ENCODE measurements at regions of chr6 and their contacts with region 1.

Region 1: GRCh38 chr6:118893807-118894424 is at the start of gene ASF1A:
- DNase-seq: peak; percentile 92 to 97 (median 96)
- H3K4me3 ChIP-seq: peak within 1 kb of the TSS; percentile 92
- H3K4me3 Mint-ChIP-seq: peak within 1 kb of the TSS; percentile 89 to 99 (median 94)
- H3K27ac ChIP-seq: peak within 1 kb of the TSS; percentile 87
- H3K27ac Mint-ChIP-seq: peak within 1 kb of the TSS; percentile 96 to 99 (median 98)
- H3K4me1 ChIP-seq: peaks cover 63% of the 10 kb centered on the region
- H3K4me1 Mint-ChIP-seq: peaks cover 54 to 73% (median 69%) of the 10 kb centered on the region in 3 donors
- H3K27me3 ChIP-seq: no peaks in the 10 kb centered on the region
- H3K27me3 Mint-ChIP-seq: peaks cover 0 to 3% of the 10 kb centered on the region in 2 donors
- total RNA-seq, gene ASF1A: 42.6 to 46.1 TPM

Region 2: DNA sequence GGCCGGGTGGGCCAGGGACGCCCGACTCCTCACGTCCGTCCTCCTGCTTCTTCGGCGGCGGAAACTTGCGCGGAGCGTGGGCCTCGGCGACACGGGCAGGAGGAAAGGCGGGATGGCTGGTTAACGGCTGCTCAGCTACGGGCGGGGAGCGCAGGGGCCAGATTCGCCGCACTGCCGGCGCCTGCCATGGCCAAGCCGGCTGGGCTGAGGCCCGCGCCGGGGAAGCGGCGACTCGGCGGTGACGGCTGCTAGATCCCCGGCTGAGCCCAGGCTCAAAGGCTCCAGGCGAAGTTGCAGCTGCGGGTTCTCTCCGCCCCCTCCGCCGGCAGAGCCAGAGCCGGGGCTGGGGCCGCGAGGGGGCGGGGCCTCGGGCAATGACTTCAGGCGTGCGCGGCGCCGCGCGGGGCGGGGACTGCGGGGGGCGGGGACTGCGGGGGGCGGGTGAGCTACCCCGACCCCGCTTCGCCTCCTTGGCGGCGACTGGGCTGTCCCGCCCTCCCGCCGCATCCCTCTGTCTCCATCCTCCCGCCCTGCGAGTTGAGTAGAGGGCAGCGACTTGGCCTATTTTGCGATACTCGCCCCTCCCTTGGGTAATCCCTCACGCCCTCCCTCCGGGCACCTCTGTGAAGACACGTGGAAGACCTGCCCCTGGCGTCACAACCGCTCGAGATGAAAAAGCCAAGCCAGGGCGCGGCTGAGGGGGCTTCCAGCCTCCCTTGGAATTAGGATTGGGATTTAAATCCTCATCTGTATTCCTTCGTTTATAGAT is 242.4 kb before region 1 on chr6 and contains the start of gene CEP85L:
- CTCF ChIA-PET with region 1: interaction called, 3 read pairs
- POLR2A ChIA-PET with region 1: interaction called, 10 read pairs
- DNase-seq: peak; percentile 87 to 94 (median 89)
- H3K4me3 ChIP-seq: peak within 1 kb of the TSS; percentile 75
- H3K4me3 Mint-ChIP-seq: peak within 1 kb of the TSS; percentile 94 to 98 (median 97)
- H3K27ac ChIP-seq: peak within 1 kb of the TSS; percentile 82
- H3K27ac Mint-ChIP-seq: peak within 1 kb of the TSS; percentile 87 to 98 (median 97)
- H3K4me1 ChIP-seq: peaks cover 34% of the 10 kb centered on the region
- H3K4me1 Mint-ChIP-seq: peaks cover 45 to 56% (median 54%) of the 10 kb centered on the region in 3 donors
- H3K27me3 ChIP-seq: no peaks in the 10 kb centered on the region
- H3K27me3 Mint-ChIP-seq: peaks cover 0 to 2% of the 10 kb centered on the region in 2 donors
- total RNA-seq, gene CEP85L: 28.4 to 29.1 TPM

Region 3: DNA sequence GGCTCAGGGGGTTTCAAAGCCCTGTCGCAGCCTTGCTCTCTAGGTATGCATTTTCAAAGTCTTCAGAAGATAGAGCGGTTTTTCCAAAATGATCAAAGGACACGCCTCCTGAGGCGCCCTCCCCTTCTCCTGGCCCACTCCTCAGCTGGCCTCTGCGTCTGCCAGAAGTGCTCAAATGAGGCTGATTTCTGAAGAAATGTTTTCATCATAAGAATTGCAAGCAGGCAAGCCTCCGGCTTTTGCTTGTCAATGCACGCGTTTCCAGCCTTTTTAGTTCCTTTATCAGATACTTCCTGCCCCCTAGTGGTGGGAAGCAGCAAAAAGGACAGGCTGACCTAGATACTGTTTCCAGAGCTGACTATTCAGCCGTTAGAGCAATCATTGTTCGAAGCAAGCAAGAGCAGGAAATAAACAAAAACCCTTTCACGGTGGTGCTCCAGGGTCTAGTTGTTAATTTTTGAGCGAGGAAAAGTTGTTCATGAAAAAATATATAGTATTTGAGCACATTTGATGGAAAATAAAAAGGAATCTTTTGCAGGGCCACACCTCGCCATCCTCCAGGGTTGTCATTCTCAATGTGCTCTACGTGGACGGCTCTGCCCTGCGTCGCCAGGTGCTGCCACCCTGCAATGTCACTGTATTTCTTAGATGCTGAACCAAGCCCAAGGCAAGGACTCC is 93.4 kb before region 1 on chr6:
- CTCF ChIA-PET with region 1: interaction called, 32 read pairs
- POLR2A ChIA-PET with region 1: interaction called, 5 read pairs
- DNase-seq: peak; percentile 64 to 87 (median 81)
- H3K4me3 ChIP-seq: peak overlapping the region; percentile 22
- H3K4me3 Mint-ChIP-seq: peak overlapping the region; percentile 4 to 71 (median 55)
- H3K27ac ChIP-seq: no peak overlapping the region
- H3K27ac Mint-ChIP-seq: peak overlapping the region; percentile 30 to 96 (median 90)
- H3K4me1 ChIP-seq: peaks cover 27% of the 10 kb centered on the region
- H3K4me1 Mint-ChIP-seq: peaks cover 35 to 47% (median 41%) of the 10 kb centered on the region in 3 donors
- H3K27me3 ChIP-seq: no peaks in the 10 kb centered on the region
- H3K27me3 Mint-ChIP-seq: no peaks in the 10 kb centered on the region

Region 4: DNA sequence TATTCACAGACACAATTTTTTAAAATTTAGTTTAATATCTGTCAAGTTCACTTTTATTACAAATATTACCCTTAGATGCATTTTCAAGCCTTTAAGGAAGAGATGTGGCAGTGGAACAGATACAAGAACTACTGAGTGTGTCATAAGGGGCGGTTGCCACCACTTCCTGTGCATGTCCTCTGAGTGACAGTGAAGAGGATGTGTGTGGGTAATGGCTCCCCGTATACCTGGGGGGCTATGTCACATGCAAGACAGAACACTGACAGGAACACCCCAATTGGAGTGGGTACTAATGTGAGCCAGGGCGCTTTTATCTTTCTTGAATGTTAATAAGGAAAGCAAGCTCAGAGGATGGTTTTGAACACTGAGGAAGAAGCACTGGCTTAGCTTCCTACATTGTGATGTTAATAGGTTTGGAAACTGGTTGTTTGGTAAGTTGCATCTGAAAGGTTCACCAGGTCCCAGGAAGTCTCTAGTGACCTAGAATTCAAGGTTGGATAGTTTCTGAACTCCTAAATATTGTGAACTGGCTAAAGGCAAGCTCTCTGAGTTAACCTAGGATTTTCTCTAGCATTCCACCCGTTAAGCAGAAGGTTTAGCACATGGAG is 83.4 kb before region 1 on chr6:
- CTCF ChIA-PET with region 1: interaction called, 44 read pairs
- POLR2A ChIA-PET with region 1: interaction called, 24 read pairs
- DNase-seq: peak; percentile 56 to 88 (median 77)
- H3K4me3 ChIP-seq: peak overlapping the region; percentile 49
- H3K4me3 Mint-ChIP-seq: peak overlapping the region; percentile 12 to 87 (median 82)
- H3K27ac ChIP-seq: peak overlapping the region; percentile 57
- H3K27ac Mint-ChIP-seq: peak overlapping the region; percentile 81 to 99 (median 98)
- H3K4me1 ChIP-seq: peaks cover 33% of the 10 kb centered on the region
- H3K4me1 Mint-ChIP-seq: peaks cover 65 to 78% (median 78%) of the 10 kb centered on the region in 3 donors
- H3K27me3 ChIP-seq: no peaks in the 10 kb centered on the region
- H3K27me3 Mint-ChIP-seq: no peaks in the 10 kb centered on the region

Region 5: GRCh38 chr6:118934461-118935330 is 40.8 kb after region 1 on chr6 and contains the start of gene MCM9:
- CTCF ChIA-PET with region 1: interaction called, 5 read pairs
- POLR2A ChIA-PET with region 1: interaction called, 21 read pairs
- DNase-seq: peak; percentile 84 to 88 (median 87)
- H3K4me3 ChIP-seq: peak within 1 kb of the TSS; percentile 96
- H3K4me3 Mint-ChIP-seq: peak within 1 kb of the TSS; percentile 86 to 97 (median 89)
- H3K27ac ChIP-seq: peak within 1 kb of the TSS; percentile 97
- H3K27ac Mint-ChIP-seq: peak within 1 kb of the TSS; percentile 89 to 94 (median 92)
- H3K4me1 ChIP-seq: peaks cover 18% of the 10 kb centered on the region
- H3K4me1 Mint-ChIP-seq: peaks cover 26 to 53% (median 52%) of the 10 kb centered on the region in 3 donors
- H3K27me3 ChIP-seq: no peaks in the 10 kb centered on the region
- H3K27me3 Mint-ChIP-seq: no peaks in the 10 kb centered on the region
- total RNA-seq, gene MCM9: 21.3 to 25.2 TPM

Region 6: GRCh38 chr6:118968416-118968815 is 74.5 kb after region 1 on chr6:
- CTCF ChIA-PET with region 1: no interaction called
- POLR2A ChIA-PET with region 1: no interaction called
- DNase-seq: no peak
- H3K4me3 ChIP-seq: no peak overlapping the region
- H3K4me3 Mint-ChIP-seq: no peak overlapping the region
- H3K27ac ChIP-seq: no peak overlapping the region
- H3K27ac Mint-ChIP-seq: no peak overlapping the region
- H3K4me1 ChIP-seq: no peaks in the 10 kb centered on the region
- H3K4me1 Mint-ChIP-seq: no peaks in the 10 kb centered on the region
- H3K27me3 ChIP-seq: no peaks in the 10 kb centered on the region
- H3K27me3 Mint-ChIP-seq: no peaks in the 10 kb centered on the region

Region 7: DNA sequence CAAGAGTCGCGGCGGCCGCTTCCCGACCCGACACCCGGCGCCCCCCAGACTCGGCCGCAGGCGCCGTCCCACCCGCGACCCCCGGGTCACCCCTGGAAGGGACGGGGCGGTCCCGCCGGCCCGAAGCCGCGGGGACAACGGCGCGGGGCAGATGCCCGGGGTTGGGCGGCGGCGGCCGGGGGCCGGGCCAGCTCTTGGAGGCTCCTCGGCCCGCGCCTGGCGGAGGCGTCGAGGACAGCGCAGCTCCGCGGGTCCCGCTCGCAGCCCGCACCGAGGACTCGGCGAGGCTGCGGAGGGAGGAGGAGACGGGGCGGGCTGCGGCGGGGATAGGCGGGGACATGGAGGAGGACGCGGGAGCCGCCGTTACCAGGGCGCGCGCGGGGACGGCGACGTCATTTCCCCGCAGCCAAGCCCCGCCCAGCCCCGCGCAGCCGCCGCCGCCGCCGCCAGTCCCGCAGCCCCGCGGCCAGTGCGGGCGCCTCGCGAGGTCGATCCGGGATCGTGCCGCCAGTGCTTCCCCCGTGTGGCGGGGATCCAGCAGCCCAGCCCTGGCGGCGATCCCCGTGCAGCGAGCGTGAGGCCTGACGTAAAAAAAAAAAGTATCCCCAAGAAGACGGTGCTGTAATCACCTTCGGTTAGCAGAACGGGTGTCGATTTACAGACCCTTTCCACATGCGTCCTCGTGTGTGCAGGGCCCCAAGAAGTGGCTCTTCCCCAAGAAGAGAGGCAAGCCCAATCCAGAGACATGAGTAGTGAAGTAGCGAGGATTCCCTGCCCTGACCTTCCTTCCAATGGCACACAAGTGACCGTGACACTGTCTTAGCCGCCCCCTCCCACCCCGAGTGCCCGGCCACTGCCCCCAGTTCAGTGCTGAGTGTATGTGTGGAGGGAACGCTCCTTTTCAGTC is 184.7 kb after region 1 on chr6 and contains the start of gene FAM184A:
- CTCF ChIA-PET with region 1: interaction called, 3 read pairs
- POLR2A ChIA-PET with region 1: interaction called, 12 read pairs
- DNase-seq: peak; percentile 68 to 82 (median 78)
- H3K4me3 ChIP-seq: peak within 1 kb of the TSS; percentile 63
- H3K4me3 Mint-ChIP-seq: peak within 1 kb of the TSS; percentile 89 to 98 (median 92)
- H3K27ac ChIP-seq: peak within 1 kb of the TSS; percentile 49
- H3K27ac Mint-ChIP-seq: peak within 1 kb of the TSS; percentile 29 to 97 (median 88)
- H3K4me1 ChIP-seq: peaks cover 14% of the 10 kb centered on the region
- H3K4me1 Mint-ChIP-seq: peaks cover 27 to 38% (median 32%) of the 10 kb centered on the region in 3 donors
- H3K27me3 ChIP-seq: no peaks in the 10 kb centered on the region
- H3K27me3 Mint-ChIP-seq: no peaks in the 10 kb centered on the region
- total RNA-seq, gene FAM184A: 2.0 to 2.2 TPM